ENCODE measurements at regions of chr3 and their contacts with region 1.

Region 1: DNA sequence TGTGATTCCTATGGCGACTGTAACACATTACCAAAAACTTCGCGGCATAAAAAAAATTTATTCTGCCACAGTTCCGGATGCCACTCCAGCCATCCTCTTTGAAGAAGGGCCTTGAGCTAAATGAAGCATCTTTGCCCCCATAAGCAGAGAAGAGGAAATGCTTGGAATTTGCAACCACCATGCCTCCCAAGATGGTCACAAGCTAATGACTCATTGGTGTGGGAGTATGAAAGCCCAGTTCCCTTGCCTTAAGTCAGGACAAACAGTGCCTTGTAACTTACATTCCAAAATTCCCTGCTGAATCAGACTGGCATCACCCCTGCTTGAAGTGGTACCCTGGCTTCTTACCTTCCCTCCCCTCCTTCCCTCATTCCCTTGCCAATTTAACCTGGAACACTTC is 1077.4 kb downstream of the EPHA3 start:
- DNase-seq: peak; percentile 49
- ATAC-seq: peak; percentile 72
- H3K4me3 ChIP-seq: no peak overlapping the region
- H3K27ac ChIP-seq: no peak overlapping the region
- H3K4me1 ChIP-seq: no peaks in the 10 kb centered on the region
- H3K27me3 ChIP-seq: peaks cover 11% of the 10 kb centered on the region
- CTCF ChIP-seq: no peak

Region 2: GRCh38 chr3:88408935-88409334 is 1775.9 kb before region 1 on chr3:
- CTCF ChIA-PET with region 1: no interaction called
- POLR2A ChIA-PET with region 1: no interaction called
- intact Hi-C with region 1: no loop called
- DNase-seq: no peak
- ATAC-seq: no peak
- H3K4me3 ChIP-seq: no peak overlapping the region
- H3K27ac ChIP-seq: no peak overlapping the region
- H3K4me1 ChIP-seq: no peaks in the 10 kb centered on the region
- H3K27me3 ChIP-seq: peaks cover 41% of the 10 kb centered on the region
- CTCF ChIP-seq: no peak

Region 3: GRCh38 chr3:88986834-88987233 is 1198.0 kb before region 1 on chr3:
- CTCF ChIA-PET with region 1: no interaction called
- POLR2A ChIA-PET with region 1: no interaction called
- intact Hi-C with region 1: loop called (anchors 10 kb)
- DNase-seq: peak; percentile 82
- ATAC-seq: peak; percentile 53
- H3K4me3 ChIP-seq: no peak overlapping the region
- H3K27ac ChIP-seq: no peak overlapping the region
- H3K4me1 ChIP-seq: no peaks in the 10 kb centered on the region
- H3K27me3 ChIP-seq: no peaks in the 10 kb centered on the region; the same call in 1 of the 2 replicates
- CTCF ChIP-seq: no peak

Region 4: GRCh38 chr3:89107461-89108290 is 1077.2 kb before region 1 on chr3 and contains the start of gene EPHA3:
- CTCF ChIA-PET with region 1: no interaction called
- POLR2A ChIA-PET with region 1: no interaction called
- intact Hi-C with region 1: loop called (anchors 10 kb)
- DNase-seq: no peak
- ATAC-seq: peak; percentile 73
- H3K4me3 ChIP-seq: peak within 1 kb of the TSS; percentile 40; the same call in 1 of the 2 replicates
- H3K27ac ChIP-seq: no peak within 1 kb of the TSS
- H3K4me1 ChIP-seq: no peaks in the 10 kb centered on the region
- H3K27me3 ChIP-seq: peaks cover 58% of the 10 kb centered on the region
- CTCF ChIP-seq: no peak
- total RNA-seq, gene EPHA3: 0.33 TPM in 1 of 2 replicates, not detected in the other

Region 5: GRCh38 chr3:89340408-89340807 is 844.5 kb before region 1 on chr3:
- CTCF ChIA-PET with region 1: no interaction called
- POLR2A ChIA-PET with region 1: no interaction called
- intact Hi-C with region 1: no loop called
- DNase-seq: no peak
- ATAC-seq: no peak
- H3K4me3 ChIP-seq: no peak overlapping the region
- H3K27ac ChIP-seq: no peak overlapping the region
- H3K4me1 ChIP-seq: no peaks in the 10 kb centered on the region
- H3K27me3 ChIP-seq: peaks cover 23% of the 10 kb centered on the region; the same call in 1 of the 2 replicates
- CTCF ChIP-seq: no peak

Region 6: DNA sequence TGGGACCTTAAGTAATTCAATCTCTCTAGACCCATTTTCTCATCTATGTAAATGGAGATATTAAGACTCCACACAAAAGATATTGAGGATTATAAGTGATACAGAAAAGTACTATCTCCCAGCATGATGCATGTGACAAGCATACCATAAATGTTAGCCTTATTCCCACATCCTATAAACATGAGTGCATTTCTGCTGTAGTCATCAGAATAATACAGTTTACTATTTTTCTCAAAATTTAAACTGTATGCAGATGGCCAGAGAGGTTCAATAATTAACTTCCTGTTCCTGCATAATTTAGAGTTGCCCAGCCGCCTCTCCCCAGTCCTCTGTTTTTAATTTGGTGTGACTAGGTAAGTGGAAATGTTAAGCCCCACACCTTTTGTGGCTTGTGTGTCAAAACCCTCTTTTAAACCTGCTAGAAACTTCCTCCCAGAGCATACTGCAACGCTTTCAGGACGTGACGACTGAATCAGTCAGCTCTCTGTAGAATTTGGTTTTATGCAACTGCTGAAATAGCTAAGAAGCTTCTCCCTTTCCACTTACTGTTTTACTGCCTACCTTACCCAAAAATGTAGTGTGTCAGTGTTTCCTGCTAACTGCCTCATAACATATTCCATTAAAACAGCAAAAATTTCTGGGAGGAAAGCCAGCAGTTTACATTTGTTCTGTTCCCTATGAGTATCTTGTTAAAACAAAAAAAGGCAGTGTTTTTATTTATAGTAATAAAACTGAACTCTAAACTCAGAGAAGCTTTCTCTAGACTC is 39.6 kb before region 1 on chr3:
- CTCF ChIA-PET with region 1: no interaction called
- POLR2A ChIA-PET with region 1: no interaction called
- intact Hi-C with region 1: no loop called
- DNase-seq: peak; percentile 39
- ATAC-seq: peak; percentile 66
- H3K4me3 ChIP-seq: no peak overlapping the region
- H3K27ac ChIP-seq: peak overlapping the region; percentile 15; the same call in 1 of the 2 replicates
- H3K4me1 ChIP-seq: no peaks in the 10 kb centered on the region
- H3K27me3 ChIP-seq: no peaks in the 10 kb centered on the region
- CTCF ChIP-seq: no peak

Measured in PC-3 (cell line).